ENCODE measurements at regions of chr2 and their contacts with region 1.

Region 1: DNA sequence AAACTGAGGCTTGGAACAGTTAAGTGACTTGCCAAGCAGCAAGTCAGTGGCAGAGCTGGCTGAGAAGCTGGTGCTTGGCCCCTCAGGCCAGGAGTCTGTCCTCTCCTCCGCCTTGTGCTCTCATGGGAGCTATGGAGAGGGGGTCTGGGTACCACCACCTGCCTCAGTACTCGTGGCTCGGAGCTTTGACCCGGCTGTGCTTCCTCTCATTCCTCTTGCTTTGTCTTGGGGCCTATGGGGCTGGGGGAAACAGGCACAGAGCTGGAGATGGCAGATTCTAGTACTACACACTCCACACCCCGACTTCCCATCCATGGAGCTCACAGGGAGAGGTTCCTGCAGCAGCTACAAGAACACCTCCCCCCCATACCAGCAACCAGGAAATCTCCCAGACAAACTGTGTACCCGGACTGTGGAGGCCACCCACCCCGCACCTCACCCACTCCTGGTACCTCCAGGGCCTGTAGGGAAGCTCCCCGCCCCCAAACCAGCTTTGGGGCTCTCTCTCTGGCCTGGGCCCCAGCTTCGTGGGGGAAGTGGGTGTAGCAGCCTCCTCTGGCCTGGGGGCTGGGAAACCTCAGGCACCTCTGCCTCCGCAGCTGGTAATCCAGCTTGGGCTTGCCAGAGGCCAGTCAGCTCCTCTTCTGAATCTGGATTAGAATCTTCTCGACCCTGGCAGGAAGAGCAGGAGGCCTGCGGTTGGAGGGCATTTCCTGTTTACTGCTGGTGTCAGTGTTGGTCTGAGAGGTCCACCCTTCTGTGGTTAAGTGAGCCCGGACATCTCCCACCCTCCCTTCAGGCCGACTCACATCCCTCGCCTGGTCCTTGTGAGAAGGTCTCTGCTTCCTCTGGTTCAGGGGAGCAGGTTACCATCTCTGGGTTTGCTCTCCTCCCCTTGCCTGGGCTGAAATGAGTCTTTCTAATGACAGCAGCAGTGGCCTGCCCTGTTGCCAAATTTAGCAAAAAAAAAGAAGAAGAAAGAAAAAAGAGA is 22.3 kb upstream of the RHOB start:
- DNase-seq: peak; percentile 77
- ATAC-seq: peak; percentile 71
- H3K4me3 Mint-ChIP-seq: no peak overlapping the region
- H3K27ac Mint-ChIP-seq: peak overlapping the region; percentile 82
- H3K4me1 Mint-ChIP-seq: peaks cover 29% of the 10 kb centered on the region
- H3K27me3 Mint-ChIP-seq: peaks cover 6% of the 10 kb centered on the region

Region 2: GRCh38 chr2:20326163-20326780 is 98.3 kb before region 1 on chr2:
- CTCF ChIA-PET with region 1: interaction called, 15 read pairs
- DNase-seq: peak; percentile 67
- ATAC-seq: peak; percentile 81
- H3K4me3 Mint-ChIP-seq: no peak overlapping the region
- H3K27ac Mint-ChIP-seq: peak overlapping the region; percentile 63
- H3K4me1 Mint-ChIP-seq: peaks cover 62% of the 10 kb centered on the region
- H3K27me3 Mint-ChIP-seq: no peaks in the 10 kb centered on the region

Region 3: DNA sequence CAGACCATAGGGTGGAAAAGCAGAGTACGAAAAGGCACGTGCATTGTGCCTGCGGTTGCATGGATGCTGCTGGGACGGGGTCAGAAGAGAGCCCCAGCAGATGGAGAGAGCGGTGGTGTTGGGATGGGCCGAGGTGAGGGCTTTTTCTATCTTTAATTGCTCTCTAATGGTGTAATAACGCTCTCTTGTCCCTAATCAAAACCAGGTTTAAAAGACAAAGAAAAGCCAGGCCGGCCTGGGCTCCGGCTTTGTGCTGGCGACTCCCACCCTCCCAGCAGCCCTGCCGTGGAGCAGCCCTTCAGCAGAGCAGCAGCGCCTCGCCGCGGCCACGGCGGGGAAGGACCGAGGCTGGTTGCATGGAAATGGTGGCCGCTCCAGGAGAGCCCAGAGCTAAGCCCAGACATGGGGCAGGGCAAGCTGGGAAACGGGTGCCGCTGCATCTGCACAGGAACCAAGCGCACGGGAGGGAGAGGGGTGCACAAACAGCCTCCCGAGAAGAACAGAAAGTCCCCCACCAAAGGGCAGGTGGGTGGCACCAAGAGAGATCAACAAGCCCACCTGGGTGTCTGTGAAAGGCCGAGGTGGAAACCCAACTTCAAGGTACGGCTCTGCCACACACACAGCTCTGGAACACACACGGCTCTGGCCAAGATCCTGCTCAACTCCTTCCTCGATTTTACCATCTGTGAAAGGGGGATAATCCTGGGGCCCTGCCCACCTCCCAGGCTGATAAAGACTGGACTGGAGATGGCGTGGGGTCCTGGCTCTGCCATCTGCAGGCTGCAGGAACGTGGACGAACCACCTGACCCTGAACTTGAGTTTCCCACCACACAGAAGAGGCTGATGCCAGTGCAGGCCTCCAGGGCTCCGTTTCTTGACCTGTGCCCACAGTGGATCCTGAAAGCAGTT is 211.3 kb after region 1 on chr2:
- CTCF ChIA-PET with region 1: interaction called, 12 read pairs
- DNase-seq: peak; percentile 71
- ATAC-seq: peak; percentile 86
- H3K4me3 Mint-ChIP-seq: no peak overlapping the region
- H3K27ac Mint-ChIP-seq: no peak overlapping the region
- H3K4me1 Mint-ChIP-seq: peaks cover 8% of the 10 kb centered on the region
- H3K27me3 Mint-ChIP-seq: no peaks in the 10 kb centered on the region